Breast epithelium (tissue), 4 donors: ENCODE measurements at regions of chr19 and their contacts with region 1.

Region 1: DNA sequence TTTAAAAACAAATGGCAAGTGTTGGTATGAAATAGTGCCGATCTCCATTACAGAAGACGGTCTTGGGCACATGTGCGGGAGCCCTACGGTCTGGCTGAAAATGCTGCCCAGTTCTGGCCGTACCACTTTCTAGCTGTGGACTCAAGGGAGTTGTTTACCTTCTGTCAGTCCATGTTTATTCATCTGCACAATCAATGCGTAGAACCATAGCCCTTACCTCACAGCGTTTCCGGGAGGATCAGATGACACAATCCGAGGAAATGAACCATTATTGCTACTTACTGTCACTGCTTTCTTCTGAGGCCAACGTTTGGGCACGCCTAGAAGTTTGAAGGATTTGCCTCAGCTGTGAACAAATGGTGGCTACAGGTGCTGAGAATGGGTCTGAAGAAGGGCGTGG is 31.2 kb downstream of the GADD45B start:
- DNase-seq: peak; percentile 55 to 76
- H3K4me3 ChIP-seq: peak overlapping the region in 1 of 3 donors; percentile 22
- H3K27ac ChIP-seq: peak overlapping the region; percentile 80 to 87
- H3K4me1 ChIP-seq: no peaks in the 10 kb centered on the region
- H3K27me3 ChIP-seq: no peaks in the 10 kb centered on the region
- CTCF ChIP-seq: no peak
- POLR2A ChIP-seq: no peak

Region 2: DNA sequence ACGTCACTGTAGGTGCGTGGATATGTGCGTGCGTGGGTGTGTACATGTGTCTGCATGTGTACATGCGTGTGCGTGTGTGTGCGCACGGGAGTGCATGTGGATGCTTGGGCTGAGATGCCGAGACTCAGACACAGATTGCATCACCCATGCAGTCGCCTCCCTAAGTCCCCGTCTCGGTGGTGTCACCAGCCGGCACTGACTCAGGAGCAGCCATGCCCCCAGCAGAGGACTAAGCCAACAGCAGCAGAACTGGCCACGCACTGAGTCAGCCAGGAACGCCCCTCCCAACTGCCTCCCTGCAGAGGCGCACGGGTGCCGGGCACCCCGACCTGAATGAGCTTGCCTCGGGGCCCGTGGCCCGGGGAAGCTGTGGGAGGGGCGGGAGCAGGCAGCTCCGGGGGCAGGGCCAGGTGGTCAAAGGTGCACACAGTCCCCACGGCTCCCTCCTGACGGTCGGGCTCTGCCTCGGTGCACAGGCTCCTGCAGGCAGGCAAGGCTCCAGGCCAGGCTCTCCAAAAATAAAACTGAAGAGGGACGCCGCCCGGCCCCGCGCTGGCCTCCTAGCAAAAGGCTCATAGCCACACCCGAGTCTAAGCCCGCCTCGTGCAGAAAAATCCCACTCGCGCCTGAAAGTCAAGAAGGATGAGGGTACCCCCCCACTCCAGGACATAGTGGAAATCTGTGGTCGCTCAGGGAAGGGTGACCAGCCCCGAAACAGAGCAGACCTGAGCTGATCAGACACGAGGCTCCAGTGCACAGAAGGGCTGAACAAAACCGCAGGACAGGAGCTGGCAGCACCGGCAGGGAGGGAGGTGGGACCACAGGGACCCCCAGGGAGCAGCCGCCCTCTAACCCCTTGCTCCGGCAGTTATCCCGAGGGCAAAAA is 18.0 kb after region 1 on chr19:
- intact Hi-C with region 1: loop called (anchors 1 kb)
- DNase-seq: peak in 1 of 2 donors; percentile 63
- H3K4me3 ChIP-seq: peak overlapping the region; percentile 7 to 44 (median 32)
- H3K27ac ChIP-seq: peak overlapping the region; percentile 40 to 48
- H3K4me1 ChIP-seq: no peaks in the 10 kb centered on the region
- H3K27me3 ChIP-seq: no peaks in the 10 kb centered on the region
- CTCF ChIP-seq: no peak
- POLR2A ChIP-seq: no peak

Region 3: DNA sequence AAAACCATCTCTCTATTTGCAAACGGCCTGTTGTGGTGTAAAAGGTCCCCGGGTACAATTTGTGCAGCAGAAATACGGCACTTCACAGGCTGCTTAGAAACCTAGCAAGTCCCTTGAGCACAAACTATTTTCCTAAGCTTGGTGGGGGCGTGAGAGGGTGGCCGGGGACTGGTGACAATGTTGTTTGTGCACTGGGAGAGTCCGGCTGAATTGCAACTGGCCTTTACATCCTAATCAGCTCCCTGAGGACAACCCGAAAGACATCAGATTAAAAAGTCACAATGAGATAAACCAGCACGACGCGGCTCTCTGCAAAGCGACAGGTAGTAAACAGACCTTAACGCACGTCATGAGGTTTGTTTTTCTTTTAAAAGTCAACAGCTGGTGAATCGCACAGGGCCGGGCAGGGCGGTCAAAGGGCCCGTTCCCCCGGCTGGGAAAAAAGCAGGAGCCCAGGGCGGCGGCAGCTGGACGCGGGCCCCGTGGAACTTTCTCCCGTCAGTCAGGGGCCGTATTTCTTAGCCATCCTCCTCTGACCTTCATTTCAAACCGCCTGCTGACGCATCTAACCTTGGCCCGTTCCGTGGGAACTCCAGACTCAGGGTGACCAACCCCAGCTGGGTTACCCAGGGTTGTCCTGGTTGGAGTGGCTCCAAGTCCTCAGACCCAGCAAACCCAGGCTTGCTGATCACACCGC is 81.1 kb after region 1 on chr19:
- intact Hi-C with region 1: no loop called
- DNase-seq: peak in 1 of 2 donors; percentile 64
- H3K4me3 ChIP-seq: no peak overlapping the region
- H3K27ac ChIP-seq: peak overlapping the region; percentile 0 to 60
- H3K4me1 ChIP-seq: no peaks in the 10 kb centered on the region
- H3K27me3 ChIP-seq: no peaks in the 10 kb centered on the region
- CTCF ChIP-seq: no peak
- POLR2A ChIP-seq: no peak